Thyroid gland (tissue), 4 donors: ENCODE measurements at regions of chr16 and their contacts with region 1.

Region 1: DNA sequence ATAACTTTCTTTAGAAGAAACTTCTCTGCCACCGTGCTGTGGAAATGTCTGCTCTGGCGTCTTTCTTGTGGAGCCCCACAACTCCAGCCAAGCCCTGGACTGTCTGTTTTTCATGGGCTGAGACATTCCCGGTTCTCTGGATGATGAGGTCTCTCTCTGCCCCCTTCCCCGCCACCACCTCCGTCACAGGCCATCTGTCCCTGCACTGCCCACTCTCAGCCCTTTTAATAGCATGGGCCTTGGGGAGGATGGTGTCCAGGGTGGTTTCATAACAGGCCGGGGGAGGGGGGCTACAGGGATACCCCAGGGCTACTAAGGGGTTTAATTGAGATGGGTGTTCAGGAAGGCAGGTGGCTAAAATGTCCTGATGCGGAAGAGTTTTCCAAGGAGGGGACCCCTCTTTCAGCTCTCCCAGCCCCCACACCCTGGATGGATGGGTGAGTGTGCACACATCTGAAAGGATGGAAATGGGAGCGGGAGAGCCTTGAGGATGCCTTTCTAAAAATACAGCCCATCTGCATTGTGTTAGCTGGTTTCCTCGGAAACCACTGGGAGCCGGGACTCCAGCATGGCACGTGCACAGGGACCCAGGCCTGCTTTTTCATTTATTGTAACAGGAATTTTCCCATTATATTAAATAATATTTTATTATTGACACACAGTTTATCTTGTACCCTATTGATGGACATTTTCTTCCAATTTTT is 14.6 kb upstream of the NDRG4 start:
- DNase-seq: no peak
- H3K4me3 ChIP-seq: no peak overlapping the region
- H3K27ac ChIP-seq: no peak overlapping the region
- H3K4me1 ChIP-seq: peaks cover 0 to 6% of the 10 kb centered on the region in 2 donors
- H3K27me3 ChIP-seq: no peaks in the 10 kb centered on the region
- CTCF ChIP-seq: no peak
- POLR2A ChIP-seq: no peak

Region 2: GRCh38 chr16:58236231-58236690 is 249.1 kb before region 1 on chr16:
- intact Hi-C with region 1: no loop called
- DNase-seq: peak; percentile 65 to 69
- H3K4me3 ChIP-seq: peak overlapping the region in 1 of 3 donors; percentile 21
- H3K27ac ChIP-seq: no peak overlapping the region
- H3K4me1 ChIP-seq: peaks cover 0 to 8% of the 10 kb centered on the region in 2 donors
- H3K27me3 ChIP-seq: no peaks in the 10 kb centered on the region
- CTCF ChIP-seq: no peak
- POLR2A ChIP-seq: no peak

Region 3: GRCh38 chr16:58299757-58300349 is 185.5 kb before region 1 on chr16:
- intact Hi-C with region 1: no loop called
- DNase-seq: no peak
- H3K4me3 ChIP-seq: no peak overlapping the region
- H3K27ac ChIP-seq: no peak overlapping the region
- H3K4me1 ChIP-seq: no peaks in the 10 kb centered on the region
- H3K27me3 ChIP-seq: no peaks in the 10 kb centered on the region
- CTCF ChIP-seq: peak in 1 of 6 experiments; percentile 25
- POLR2A ChIP-seq: no peak

Region 4: DNA sequence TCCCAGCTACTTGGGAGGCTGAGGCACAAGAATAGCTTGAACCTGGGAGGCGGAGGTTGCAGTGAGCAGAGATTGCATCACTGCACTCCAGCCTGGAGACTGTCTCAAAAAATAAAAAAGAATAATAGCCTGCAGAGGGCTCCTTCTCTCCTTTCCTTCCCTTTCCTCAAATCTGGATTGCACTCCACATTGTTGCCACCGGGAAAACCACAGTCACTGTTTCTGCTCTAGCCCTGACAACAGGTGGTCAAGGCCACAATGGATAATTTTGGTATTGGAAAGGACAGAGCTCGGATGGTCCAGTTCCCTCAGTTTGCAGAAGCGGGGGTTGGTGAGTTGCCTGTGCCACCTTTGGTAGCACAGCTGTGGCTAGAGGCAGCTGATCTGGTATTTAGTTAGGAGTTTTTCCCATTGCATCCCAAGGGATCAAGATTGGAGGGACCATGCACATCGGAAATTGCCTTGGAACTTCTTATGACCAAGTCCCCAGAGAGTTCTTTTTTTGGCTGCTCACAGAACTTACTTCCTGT is 145.8 kb before region 1 on chr16:
- intact Hi-C with region 1: loop called (anchors 2 kb)
- DNase-seq: no peak
- H3K4me3 ChIP-seq: no peak overlapping the region
- H3K27ac ChIP-seq: no peak overlapping the region
- H3K4me1 ChIP-seq: peaks cover 4 to 5% of the 10 kb centered on the region in 2 donors
- H3K27me3 ChIP-seq: no peaks in the 10 kb centered on the region
- CTCF ChIP-seq: no peak
- POLR2A ChIP-seq: no peak

Region 5: GRCh38 chr16:59586331-59586730 is 1101.0 kb after region 1 on chr16:
- intact Hi-C with region 1: no loop called
- DNase-seq: no peak
- H3K4me3 ChIP-seq: no peak overlapping the region
- H3K27ac ChIP-seq: no peak overlapping the region
- H3K4me1 ChIP-seq: no peaks in the 10 kb centered on the region
- H3K27me3 ChIP-seq: no peaks in the 10 kb centered on the region
- CTCF ChIP-seq: no peak
- POLR2A ChIP-seq: no peak